ENCODE measurements at regions of chr11 and their contacts with region 1.

Region 1: GRCh38 chr11:46380340-46381047 is 975 bp upstream of the MDK start:
- DNase-seq: no peak
- ATAC-seq: peak in 1 of 2 experiments; percentile 50; a peak in 3 of 6 replicates
- H3K4me3 ChIP-seq: peak overlapping the region; percentile 48
- H3K27ac ChIP-seq: peak overlapping the region; percentile 37 to 85
- H3K4me1 ChIP-seq: peaks cover 11% of the 10 kb centered on the region
- CTCF ChIP-seq: no peak
- EP300 ChIP-seq: no peak
- POLR2A ChIP-seq: no peak
- RAD21 ChIP-seq: no peak

Region 2: DNA sequence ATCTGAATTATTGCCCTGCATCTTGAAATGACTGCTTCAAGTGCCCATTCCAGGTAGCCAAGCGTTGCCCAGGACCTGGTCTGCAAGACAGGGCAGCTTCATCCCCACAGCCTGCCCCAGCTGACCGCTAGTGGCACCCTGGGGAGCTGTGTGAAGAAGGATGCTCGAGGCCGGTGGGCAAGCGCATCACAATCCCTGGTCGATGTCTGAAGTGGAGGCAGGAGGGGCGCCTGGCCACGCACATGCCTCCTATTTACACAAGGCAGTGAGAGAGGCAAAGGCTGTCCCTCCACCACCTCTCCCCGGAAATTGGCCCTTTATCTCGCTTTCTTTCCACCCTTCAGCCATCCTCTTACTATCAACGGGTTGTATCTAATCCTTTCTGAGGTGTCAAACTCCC is 231.2 kb before region 1 on chr11:
- CTCF ChIA-PET with region 1: no interaction called
- POLR2A ChIA-PET with region 1: no interaction called
- DNase-seq: no peak
- ATAC-seq: peak; percentile 54; a peak in 4 of 6 replicates
- H3K4me3 ChIP-seq: no peak overlapping the region
- H3K27ac ChIP-seq: no peak overlapping the region
- H3K4me1 ChIP-seq: no peaks in the 10 kb centered on the region
- CTCF ChIP-seq: no peak
- EP300 ChIP-seq: no peak
- POLR2A ChIP-seq: no peak
- RAD21 ChIP-seq: no peak

Region 3: GRCh38 chr11:46346886-46347636 is 33.4 kb before region 1 on chr11 and contains the start of gene DGKZ:
- CTCF ChIA-PET with region 1: interaction called, 16 read pairs
- POLR2A ChIA-PET with region 1: no interaction called
- DNase-seq: peak; percentile 81 to 82
- ATAC-seq: peak; percentile 83 to 85
- H3K4me3 ChIP-seq: peak within 1 kb of the TSS; percentile 84
- H3K27ac ChIP-seq: peak within 1 kb of the TSS; percentile 77 to 96
- H3K4me1 ChIP-seq: peaks cover 16% of the 10 kb centered on the region
- CTCF ChIP-seq: peak; percentile 98
- EP300 ChIP-seq: no peak
- POLR2A ChIP-seq: peak; percentile 49
- RAD21 ChIP-seq: peak; percentile 17 to 52; a peak in 3 of 5 replicates
- polyA plus RNA-seq, gene DGKZ: 12.8 and 14.5 TPM in 2 replicates

Region 4: GRCh38 chr11:46367244-46367915 is 13.1 kb before region 1 on chr11:
- CTCF ChIA-PET with region 1: interaction called, 220 read pairs
- POLR2A ChIA-PET with region 1: no interaction called
- DNase-seq: peak in 1 of 2 experiments; percentile 46
- ATAC-seq: peak; percentile 59 to 83
- H3K4me3 ChIP-seq: no peak overlapping the region
- H3K27ac ChIP-seq: 0 out of 6 replicates have a peak overlapping the region, but pooled peaks of 1 of the 2 experiments have one; percentile 30
- H3K4me1 ChIP-seq: peaks cover 10% of the 10 kb centered on the region
- CTCF ChIP-seq: peak; percentile 71
- EP300 ChIP-seq: no peak
- POLR2A ChIP-seq: no peak
- RAD21 ChIP-seq: peak; percentile 57 to 61; a peak in 4 of 5 replicates

Region 5: GRCh38 chr11:46537537-46538295 is 157.2 kb after region 1 on chr11:
- CTCF ChIA-PET with region 1: interaction called, 12 read pairs
- POLR2A ChIA-PET with region 1: no interaction called
- DNase-seq: peak; percentile 75 to 83
- ATAC-seq: peak; percentile 96
- H3K4me3 ChIP-seq: no peak overlapping the region
- H3K27ac ChIP-seq: no peak overlapping the region
- H3K4me1 ChIP-seq: 0 out of 3 replicates have a peak, but pooled peaks cover 4% of the 10 kb centered on the region
- CTCF ChIP-seq: peak; percentile 91
- EP300 ChIP-seq: no peak
- POLR2A ChIP-seq: no peak
- RAD21 ChIP-seq: peak; percentile 82 to 94